ENCODE measurements at regions of chr1 and their contacts with region 1.

Region 1: DNA sequence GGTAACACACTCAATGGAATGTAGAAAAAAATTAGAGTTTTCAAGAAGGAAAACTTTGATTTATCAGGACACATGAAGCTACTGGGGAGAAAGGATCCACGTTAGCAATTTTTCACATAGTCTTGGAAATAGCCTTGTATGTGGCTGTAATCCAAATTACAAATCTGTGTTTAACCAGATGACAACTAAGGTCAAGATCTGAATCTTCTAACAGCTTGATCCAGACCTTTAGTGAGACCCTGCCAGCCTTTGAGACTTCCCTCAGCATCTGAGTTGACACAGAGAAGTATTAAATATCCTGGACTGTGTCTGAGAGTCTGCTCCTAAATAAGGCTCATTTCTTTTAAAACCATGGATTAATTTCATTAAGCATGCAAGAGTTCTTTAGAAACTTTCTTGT is 135.9 kb upstream of the KCNK2 start:
- DNase-seq: no peak
- H3K4me3 ChIP-seq: no peak overlapping the region
- H3K27ac ChIP-seq: no peak overlapping the region
- H3K4me1 ChIP-seq: no peaks in the 10 kb centered on the region
- H3K27me3 ChIP-seq: no peaks in the 10 kb centered on the region
- CTCF ChIP-seq: no peak
- POLR2A ChIP-seq: no peak

Region 2: DNA sequence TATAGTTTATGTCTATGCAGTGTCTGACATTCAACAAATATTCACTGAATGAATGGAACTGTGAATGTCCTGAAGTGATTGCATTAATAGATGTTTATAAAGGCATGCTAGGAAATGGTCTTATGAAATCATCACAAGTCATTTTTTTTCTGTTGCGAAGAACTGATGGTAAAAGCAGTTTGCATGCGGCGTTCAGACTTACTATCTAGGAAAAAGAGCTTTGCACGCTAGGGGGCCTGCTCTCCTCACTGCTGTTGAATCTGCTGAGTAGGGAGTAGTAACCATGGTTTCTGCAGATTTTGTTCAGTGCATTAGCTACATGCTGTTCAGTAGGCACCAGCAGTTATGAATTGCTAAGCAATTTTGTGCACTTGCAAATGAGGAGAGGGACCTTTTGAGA is 285.8 kb before region 1 on chr1:
- intact Hi-C with region 1: no loop called
- DNase-seq: peak; percentile 76 to 92 (median 83)
- H3K4me3 ChIP-seq: no peak overlapping the region
- H3K27ac ChIP-seq: no peak overlapping the region
- H3K4me1 ChIP-seq: peaks cover 0 to 29% of the 10 kb centered on the region in 2 donors
- H3K27me3 ChIP-seq: no peaks in the 10 kb centered on the region
- CTCF ChIP-seq: peak; percentile 57 to 78 (median 74)
- POLR2A ChIP-seq: no peak

Region 3: DNA sequence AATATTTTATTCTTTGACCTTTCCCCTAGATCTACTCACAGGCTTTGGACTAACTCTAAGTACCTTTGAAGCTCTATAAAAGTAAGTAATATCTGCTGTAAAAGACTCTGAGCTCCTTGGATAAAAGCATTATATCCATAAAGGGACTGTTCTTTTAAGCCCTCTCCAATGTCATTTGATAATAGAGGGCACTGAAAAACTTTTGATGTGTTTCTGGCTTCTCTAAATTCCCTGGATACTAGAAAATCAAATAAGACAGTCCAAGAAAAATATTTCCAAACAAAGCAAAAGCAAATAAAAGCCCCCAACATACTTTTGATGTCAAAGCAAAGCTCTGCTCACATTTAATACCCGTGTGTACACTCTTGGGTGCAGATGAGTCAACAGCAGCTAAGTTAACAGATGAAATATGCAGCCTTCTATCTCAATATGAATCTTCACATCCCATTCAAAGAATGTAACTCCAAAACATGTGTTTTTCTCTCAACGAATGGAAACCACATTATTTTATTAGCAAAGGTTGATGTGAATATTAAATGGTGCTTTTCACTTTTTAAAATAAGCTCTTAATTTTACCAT is 113.3 kb before region 1 on chr1:
- intact Hi-C with region 1: no loop called
- DNase-seq: no peak
- H3K4me3 ChIP-seq: no peak overlapping the region
- H3K27ac ChIP-seq: no peak overlapping the region
- H3K4me1 ChIP-seq: no peaks in the 10 kb centered on the region
- H3K27me3 ChIP-seq: no peaks in the 10 kb centered on the region
- CTCF ChIP-seq: no peak
- POLR2A ChIP-seq: no peak

Region 4: DNA sequence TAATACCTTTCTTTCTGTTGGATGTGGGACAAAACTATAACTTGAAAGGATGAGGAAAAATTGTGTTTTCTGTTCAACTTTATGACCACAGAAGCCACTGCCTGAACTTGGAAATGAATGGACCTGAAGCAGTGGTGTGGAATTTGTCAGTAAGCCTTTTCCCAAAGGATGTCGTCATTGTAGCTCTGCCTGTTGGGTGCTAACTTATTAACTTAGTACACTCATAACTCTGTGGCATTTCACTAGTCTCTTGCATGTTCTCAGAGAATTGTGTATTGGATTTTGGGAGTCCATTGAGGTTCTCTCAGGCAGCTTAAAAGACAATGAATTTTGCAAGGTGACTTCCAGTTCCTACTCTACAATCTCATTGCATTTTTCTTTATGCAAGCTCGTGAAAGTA is 185.5 kb after region 1 on chr1:
- intact Hi-C with region 1: no loop called
- DNase-seq: no peak
- H3K4me3 ChIP-seq: no peak overlapping the region
- H3K27ac ChIP-seq: no peak overlapping the region
- H3K4me1 ChIP-seq: peaks cover 0 to 18% of the 10 kb centered on the region in 2 donors
- H3K27me3 ChIP-seq: no peaks in the 10 kb centered on the region
- CTCF ChIP-seq: no peak
- POLR2A ChIP-seq: no peak

Region 5: GRCh38 chr1:215166886-215167285 is 220.3 kb after region 1 on chr1:
- intact Hi-C with region 1: no loop called
- DNase-seq: no peak
- H3K4me3 ChIP-seq: no peak overlapping the region
- H3K27ac ChIP-seq: no peak overlapping the region
- H3K4me1 ChIP-seq: no peaks in the 10 kb centered on the region
- H3K27me3 ChIP-seq: no peaks in the 10 kb centered on the region
- CTCF ChIP-seq: no peak
- POLR2A ChIP-seq: no peak

Region 6: GRCh38 chr1:215393481-215393880 is 446.9 kb after region 1 on chr1:
- intact Hi-C with region 1: loop called in 1 of 2 experiments (anchors 10 kb)
- DNase-seq: no peak
- H3K4me3 ChIP-seq: no peak overlapping the region
- H3K27ac ChIP-seq: no peak overlapping the region
- H3K4me1 ChIP-seq: no peaks in the 10 kb centered on the region
- H3K27me3 ChIP-seq: no peaks in the 10 kb centered on the region
- CTCF ChIP-seq: no peak
- POLR2A ChIP-seq: no peak